ENCODE measurements at regions of chr1 and their contacts with region 1.

Region 1: GRCh38 chr1:93846211-93846991 is 32.6 kb downstream of the DNTTIP2 start:
- DNase-seq: peak; percentile 86 to 94 (median 91)
- H3K4me3 ChIP-seq: peak overlapping the region; percentile 66 to 78 (median 74)
- H3K27ac ChIP-seq: peak overlapping the region; percentile 87 to 95 (median 95)
- H3K4me1 ChIP-seq: peaks cover 11 to 24% of the 10 kb centered on the region in 2 donors
- H3K27me3 ChIP-seq: no peaks in the 10 kb centered on the region
- CTCF ChIP-seq: peak in 5 of 6 experiments; percentile 15 to 59 (median 47)
- POLR2A ChIP-seq: peak; percentile 39 to 81

Region 2: GRCh38 chr1:93148001-93148400 is 698.4 kb before region 1 on chr1:
- intact Hi-C with region 1: no loop called
- DNase-seq: peak in 1 of 7 donors; percentile 16
- H3K4me3 ChIP-seq: no peak overlapping the region
- H3K27ac ChIP-seq: peak overlapping the region in 1 of 5 donors; percentile 18
- H3K4me1 ChIP-seq: peaks cover 0 to 5% of the 10 kb centered on the region in 2 donors
- H3K27me3 ChIP-seq: no peaks in the 10 kb centered on the region
- CTCF ChIP-seq: no peak
- POLR2A ChIP-seq: no peak

Region 3: GRCh38 chr1:93304716-93305138 is 541.7 kb before region 1 on chr1:
- intact Hi-C with region 1: loop called in 1 of 2 experiments (anchors 10 kb)
- DNase-seq: peak; percentile 36 to 73 (median 55)
- H3K4me3 ChIP-seq: no peak overlapping the region
- H3K27ac ChIP-seq: no peak overlapping the region
- H3K4me1 ChIP-seq: no peaks in the 10 kb centered on the region
- H3K27me3 ChIP-seq: no peaks in the 10 kb centered on the region
- CTCF ChIP-seq: peak; percentile 76 to 94 (median 84)
- POLR2A ChIP-seq: no peak

Region 4: GRCh38 chr1:93437976-93438605 is 408.3 kb before region 1 on chr1:
- intact Hi-C with region 1: loop called (anchors 10 kb)
- DNase-seq: no peak
- H3K4me3 ChIP-seq: no peak overlapping the region
- H3K27ac ChIP-seq: no peak overlapping the region
- H3K4me1 ChIP-seq: peaks cover 0 to 7% of the 10 kb centered on the region in 2 donors
- H3K27me3 ChIP-seq: no peaks in the 10 kb centered on the region
- CTCF ChIP-seq: peak; percentile 41 to 84 (median 72)
- POLR2A ChIP-seq: no peak

Region 5: DNA sequence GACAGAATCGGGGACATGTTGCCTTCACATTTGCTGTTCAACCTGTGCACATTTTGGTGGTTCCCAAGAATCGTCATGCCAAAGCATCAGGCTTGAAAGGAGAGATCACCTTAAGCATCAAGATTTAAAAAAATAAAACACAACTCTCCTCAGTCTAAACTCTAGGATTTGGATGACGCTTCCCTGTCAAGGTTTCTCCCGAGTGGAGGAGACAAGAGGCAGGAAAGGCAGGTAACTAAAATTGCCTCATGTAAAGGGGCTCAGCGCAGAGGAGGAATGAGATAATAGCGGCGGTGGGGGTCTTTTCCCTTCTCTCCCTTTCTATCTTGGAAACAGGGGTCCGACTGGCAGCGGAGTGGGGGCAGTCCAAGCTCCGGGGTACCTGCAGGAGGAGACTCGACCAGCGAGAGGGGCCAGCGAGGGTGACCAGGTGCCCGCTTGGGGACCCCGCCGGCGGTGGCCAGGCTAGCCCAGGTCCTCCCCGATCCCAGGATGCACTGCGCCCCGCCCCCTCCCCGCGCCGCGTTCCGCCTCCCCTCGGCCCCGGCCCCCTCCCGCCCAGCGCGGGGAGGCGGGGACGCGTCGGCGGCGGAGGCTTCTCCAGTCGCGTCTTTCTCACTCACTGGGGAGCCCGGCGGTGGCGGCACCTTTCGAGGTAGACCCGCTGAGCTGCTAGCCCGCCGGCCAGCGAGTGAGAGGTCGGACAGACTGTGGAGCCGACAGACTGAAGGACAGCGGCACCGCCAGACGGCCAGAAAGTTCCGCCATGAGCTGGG is 398.7 kb before region 1 on chr1 and contains the start of gene FNBP1L:
- intact Hi-C with region 1: loop called in 1 of 2 experiments (anchors 10 kb)
- DNase-seq: peak; percentile 72 to 84 (median 77)
- H3K4me3 ChIP-seq: peak within 1 kb of the TSS; percentile 42 to 97 (median 81)
- H3K27ac ChIP-seq: peak within 1 kb of the TSS in 4 of 5 donors; percentile 24 to 84 (median 63)
- H3K4me1 ChIP-seq: peaks cover 0 to 15% of the 10 kb centered on the region in 2 donors
- H3K27me3 ChIP-seq: no peaks in the 10 kb centered on the region
- CTCF ChIP-seq: no peak
- POLR2A ChIP-seq: peak in 1 of 2 donors; percentile 71
- total RNA-seq, gene FNBP1L: 6.1 to 21.0 (median 15.5) TPM

Region 6: GRCh38 chr1:93489756-93490155 is 356.6 kb before region 1 on chr1:
- intact Hi-C with region 1: no loop called
- DNase-seq: no peak
- H3K4me3 ChIP-seq: no peak overlapping the region
- H3K27ac ChIP-seq: no peak overlapping the region
- H3K4me1 ChIP-seq: peaks cover 0 to 26% of the 10 kb centered on the region in 2 donors
- H3K27me3 ChIP-seq: no peaks in the 10 kb centered on the region
- CTCF ChIP-seq: no peak
- POLR2A ChIP-seq: no peak

Region 7: DNA sequence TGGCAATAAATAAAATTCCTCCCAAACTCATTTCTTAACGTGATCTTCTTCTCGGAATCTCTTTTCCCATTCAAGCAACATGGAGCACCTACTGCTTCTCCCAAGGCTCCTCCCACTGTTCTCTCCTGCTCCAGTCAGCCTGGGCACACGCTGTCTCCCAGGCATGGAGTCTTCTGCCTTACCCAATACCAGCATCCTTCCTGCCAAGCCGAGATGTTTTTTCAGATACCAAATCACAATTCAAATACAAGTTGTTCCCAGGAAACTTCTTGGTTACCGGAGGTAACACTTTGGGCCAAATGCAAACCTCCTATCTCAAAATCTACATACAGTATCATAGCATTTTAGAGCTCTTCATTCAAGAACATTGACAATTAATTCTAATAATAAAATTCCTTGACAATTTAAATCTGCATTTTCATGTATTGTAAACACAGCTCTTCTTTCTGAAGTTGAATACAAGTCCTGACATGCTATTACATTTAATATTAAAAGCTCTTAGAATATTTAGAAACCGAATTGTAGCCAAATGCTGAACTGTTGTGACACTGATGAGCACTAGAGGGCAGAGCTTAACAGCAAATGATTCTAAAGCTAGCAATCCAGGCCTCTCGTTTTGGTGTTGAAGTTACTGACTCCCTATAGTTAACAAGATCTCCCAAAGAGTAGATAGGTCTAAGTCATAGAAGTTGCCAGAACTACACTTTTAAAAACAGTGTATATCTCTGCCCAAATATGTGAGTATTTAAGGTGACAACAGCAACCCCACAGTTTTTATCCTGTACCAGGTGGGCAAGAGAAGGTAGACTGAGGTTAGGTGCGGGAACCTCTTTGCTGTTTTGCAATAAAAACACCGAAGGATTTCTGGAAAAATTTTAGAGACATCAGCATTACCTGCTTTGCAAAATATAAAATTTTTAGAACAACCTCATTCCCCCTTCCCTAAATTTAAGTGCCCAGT is 217.0 kb before region 1 on chr1:
- intact Hi-C with region 1: loop called in 1 of 2 experiments (anchors 10 kb)
- DNase-seq: peak in 5 of 7 donors; percentile 42 to 75 (median 64)
- H3K4me3 ChIP-seq: no peak overlapping the region
- H3K27ac ChIP-seq: peak overlapping the region in 1 of 5 donors; percentile 3
- H3K4me1 ChIP-seq: peaks cover 0 to 21% of the 10 kb centered on the region in 2 donors
- H3K27me3 ChIP-seq: no peaks in the 10 kb centered on the region
- CTCF ChIP-seq: peak; percentile 62 to 91 (median 90)
- POLR2A ChIP-seq: no peak

Region 8: DNA sequence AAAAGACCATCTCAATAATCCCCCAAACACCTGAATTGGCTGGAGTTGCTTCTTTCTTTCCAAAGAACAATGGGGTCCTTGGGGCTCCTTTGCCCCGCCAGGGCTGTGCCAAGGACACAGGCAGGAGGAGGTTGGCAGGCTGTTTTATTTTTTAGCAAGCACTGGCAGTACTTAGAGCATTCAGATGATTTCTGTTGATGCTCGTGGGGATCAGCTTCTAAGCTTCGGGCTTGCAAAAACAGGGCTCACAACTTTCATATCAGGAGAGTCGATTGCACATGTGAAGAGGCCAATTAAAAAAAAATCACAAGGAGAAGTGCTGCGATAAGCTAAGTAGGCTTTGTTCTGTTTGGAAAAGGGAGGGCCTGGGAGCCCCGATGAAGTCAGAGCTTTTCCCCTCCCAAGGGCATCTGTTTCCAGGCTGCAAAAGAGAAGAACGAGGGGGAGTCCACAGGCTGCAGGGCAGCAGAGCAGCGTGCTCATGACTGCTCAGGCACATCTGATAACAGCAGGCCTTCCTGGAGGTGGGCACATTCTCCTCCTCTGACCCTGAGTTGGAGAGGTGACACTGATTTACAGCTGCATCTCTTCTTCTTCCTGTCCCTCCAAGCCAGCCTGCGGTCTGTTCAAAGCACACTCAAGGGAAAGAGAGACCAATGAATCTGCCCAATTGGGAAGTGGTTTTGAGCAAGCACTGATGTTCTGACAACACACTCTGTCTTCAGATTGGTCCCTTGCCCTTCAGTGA is 137.5 kb before region 1 on chr1:
- intact Hi-C with region 1: no loop called
- DNase-seq: peak; percentile 60 to 92 (median 81)
- H3K4me3 ChIP-seq: no peak overlapping the region
- H3K27ac ChIP-seq: peak overlapping the region in 4 of 5 donors; percentile 42 to 76 (median 58)
- H3K4me1 ChIP-seq: peaks cover 25 to 44% of the 10 kb centered on the region in 2 donors
- H3K27me3 ChIP-seq: no peaks in the 10 kb centered on the region
- CTCF ChIP-seq: no peak
- POLR2A ChIP-seq: peak in 1 of 2 donors; percentile 34

Measured in adrenal gland (tissue), 19 donors.